Posterior cingulate gyrus (tissue), 11 donors: ENCODE measurements at regions of chr9 and their contacts with region 1.

Region 1: GRCh38 chr9:99140685-99141314 is 35.9 kb downstream of the TGFBR1 start:
- DNase-seq: peak in 6 of 10 donors; percentile 17 to 88 (median 32)

Region 2: GRCh38 chr9:98848450-98849149 is 292.2 kb before region 1 on chr9:
- intact Hi-C with region 1: loop called (anchors 2 kb)
- DNase-seq: peak; percentile 77 to 99 (median 94)

Region 3: GRCh38 chr9:98860871-98861293 is 279.9 kb before region 1 on chr9:
- intact Hi-C with region 1: loop called (anchors 1 kb)
- DNase-seq: peak in 6 of 10 donors; percentile 26 to 83 (median 46)